ENCODE measurements at regions of chr20 and their contacts with region 1.

Region 1: GRCh38 chr20:49508435-49509199 is 26.1 kb upstream of the KCNB1 start:
- DNase-seq: no peak
- ATAC-seq: peak in 3 of 4 donors; percentile 43 to 72 (median 65)
- H3K4me3 ChIP-seq: no peak overlapping the region
- H3K27ac ChIP-seq: no peak overlapping the region
- H3K4me1 ChIP-seq: no peaks in the 10 kb centered on the region
- H3K27me3 ChIP-seq: no peaks in the 10 kb centered on the region
- CTCF ChIP-seq: peak in 2 of 4 donors; percentile 27

Region 2: GRCh38 chr20:49338061-49338460 is 170.6 kb before region 1 on chr20:
- intact Hi-C with region 1: loop called in 2 of 3 experiments (anchors 5 to 10 kb)
- DNase-seq: no peak
- ATAC-seq: no peak
- H3K4me3 ChIP-seq: no peak overlapping the region
- H3K27ac ChIP-seq: no peak overlapping the region
- H3K4me1 ChIP-seq: no peaks in the 10 kb centered on the region
- H3K27me3 ChIP-seq: peaks cover 0 to 3% (median 0%) of the 10 kb centered on the region in 4 donors
- CTCF ChIP-seq: no peak

Measured in pancreas (tissue), 10 donors.